ENCODE measurements at regions of chr14 and their contacts with region 1.

Region 1: GRCh38 chr14:71011479-71011878 is 104.2 kb downstream of the PCNX1 start:
- DNase-seq: peak; percentile 31
- ATAC-seq: peak; percentile 35; the same call in 1 of the 2 replicates
- H3K4me3 ChIP-seq: no peak overlapping the region
- H3K27ac ChIP-seq: no peak overlapping the region
- H3K4me1 ChIP-seq: peaks cover 14% of the 10 kb centered on the region; the same call in 1 of the 2 replicates
- H3K27me3 ChIP-seq: no peaks in the 10 kb centered on the region
- CTCF ChIP-seq: peak; percentile 78

Region 2: GRCh38 chr14:70655110-70655826 is 356.2 kb before region 1 on chr14:
- CTCF ChIA-PET with region 1: no interaction called
- POLR2A ChIA-PET with region 1: interaction called, 14 read pairs
- intact Hi-C with region 1: no loop called
- DNase-seq: no peak
- ATAC-seq: peak; percentile 50; the same call in 1 of the 2 replicates
- H3K4me3 ChIP-seq: no peak overlapping the region
- H3K27ac ChIP-seq: no peak overlapping the region
- H3K4me1 ChIP-seq: no peaks in the 10 kb centered on the region
- H3K27me3 ChIP-seq: no peaks in the 10 kb centered on the region
- CTCF ChIP-seq: no peak

Measured in PC-3 (cell line).